ENCODE measurements at regions of chr6 and their contacts with region 1.

Region 1: DNA sequence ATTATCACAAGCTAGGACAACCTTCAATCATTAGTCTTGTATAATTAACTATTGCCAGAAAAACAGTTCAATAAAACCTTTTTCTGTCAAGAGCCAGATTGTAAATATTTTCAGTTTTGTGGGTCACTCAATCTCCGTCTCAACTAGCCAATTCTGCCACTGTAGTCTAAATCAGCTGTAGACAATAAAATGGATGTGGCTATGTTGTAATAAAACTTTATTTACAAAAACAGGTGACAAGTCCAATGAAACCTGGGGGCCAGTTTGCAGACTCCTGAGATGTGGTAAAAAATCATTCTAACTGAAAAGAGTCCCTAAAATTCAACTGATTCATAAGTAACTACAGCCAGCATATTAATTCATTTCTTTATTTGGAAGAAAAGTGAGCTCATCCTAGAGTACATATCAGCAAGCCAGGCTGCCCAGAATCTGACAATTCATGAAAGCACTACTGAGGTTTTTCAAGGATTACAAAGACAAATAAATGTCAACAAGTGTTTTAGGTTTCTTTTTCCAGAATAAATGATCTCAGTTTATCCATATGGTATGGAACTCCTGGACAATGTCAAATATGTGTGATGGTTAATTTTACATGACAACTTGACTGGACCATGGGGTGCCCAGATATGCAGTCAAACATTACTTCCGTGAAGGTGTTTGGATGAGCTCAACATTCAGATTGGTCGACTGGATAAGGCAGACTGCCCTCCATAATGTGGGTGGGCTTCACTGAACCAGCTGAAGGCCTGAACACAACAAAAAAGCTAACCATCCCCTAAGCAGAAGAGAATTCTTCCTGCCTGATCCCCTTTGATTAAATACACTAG is 15.3 kb downstream of the CEP85L start:
- DNase-seq: no peak
- H3K4me3 Mint-ChIP-seq: no peak overlapping the region
- H3K27ac Mint-ChIP-seq: no peak overlapping the region
- H3K4me1 Mint-ChIP-seq: no peaks in the 10 kb centered on the region
- H3K27me3 Mint-ChIP-seq: no peaks in the 10 kb centered on the region
- CTCF ChIP-seq: no peak

Region 2: GRCh38 chr6:118625833-118626232 is 10.3 kb before region 1 on chr6:
- CTCF ChIA-PET with region 1: interaction called, 10 read pairs
- POLR2A ChIA-PET with region 1: interaction called, 3 read pairs
- intact Hi-C with region 1: no loop called
- DNase-seq: no peak
- H3K4me3 Mint-ChIP-seq: no peak overlapping the region
- H3K27ac Mint-ChIP-seq: no peak overlapping the region
- H3K4me1 Mint-ChIP-seq: no peaks in the 10 kb centered on the region
- H3K27me3 Mint-ChIP-seq: no peaks in the 10 kb centered on the region
- CTCF ChIP-seq: no peak